Activated CD8-positive, alpha-beta T cell treated with anti-CD3 and anti-CD28 coated beads for 36 hours (primary cell): ENCODE measurements at regions of chr17 and their contacts with region 1.

Region 1: GRCh38 chr17:81917565-81918332 is at the start of gene SIRT7:
- DNase-seq: peak; percentile 78
- ATAC-seq: peak; percentile 92
- H3K4me3 Mint-ChIP-seq: peak within 1 kb of the TSS; percentile 83
- H3K27ac Mint-ChIP-seq: peak within 1 kb of the TSS; percentile 78
- H3K4me1 Mint-ChIP-seq: peaks cover 20% of the 10 kb centered on the region
- H3K27me3 Mint-ChIP-seq: no peaks in the 10 kb centered on the region
- CTCF ChIP-seq: no peak
- total RNA-seq, gene SIRT7: 28.1 to 32.0 TPM

Region 2: GRCh38 chr17:81840826-81841778 is 76.6 kb before region 1 on chr17:
- CTCF ChIA-PET with region 1: no interaction called
- POLR2A ChIA-PET with region 1: no interaction called
- intact Hi-C with region 1: no loop called
- DNase-seq: no peak
- ATAC-seq: no peak
- H3K4me3 Mint-ChIP-seq: no peak overlapping the region
- H3K27ac Mint-ChIP-seq: no peak overlapping the region
- H3K4me1 Mint-ChIP-seq: no peaks in the 10 kb centered on the region
- H3K27me3 Mint-ChIP-seq: no peaks in the 10 kb centered on the region
- CTCF ChIP-seq: no peak

Region 3: DNA sequence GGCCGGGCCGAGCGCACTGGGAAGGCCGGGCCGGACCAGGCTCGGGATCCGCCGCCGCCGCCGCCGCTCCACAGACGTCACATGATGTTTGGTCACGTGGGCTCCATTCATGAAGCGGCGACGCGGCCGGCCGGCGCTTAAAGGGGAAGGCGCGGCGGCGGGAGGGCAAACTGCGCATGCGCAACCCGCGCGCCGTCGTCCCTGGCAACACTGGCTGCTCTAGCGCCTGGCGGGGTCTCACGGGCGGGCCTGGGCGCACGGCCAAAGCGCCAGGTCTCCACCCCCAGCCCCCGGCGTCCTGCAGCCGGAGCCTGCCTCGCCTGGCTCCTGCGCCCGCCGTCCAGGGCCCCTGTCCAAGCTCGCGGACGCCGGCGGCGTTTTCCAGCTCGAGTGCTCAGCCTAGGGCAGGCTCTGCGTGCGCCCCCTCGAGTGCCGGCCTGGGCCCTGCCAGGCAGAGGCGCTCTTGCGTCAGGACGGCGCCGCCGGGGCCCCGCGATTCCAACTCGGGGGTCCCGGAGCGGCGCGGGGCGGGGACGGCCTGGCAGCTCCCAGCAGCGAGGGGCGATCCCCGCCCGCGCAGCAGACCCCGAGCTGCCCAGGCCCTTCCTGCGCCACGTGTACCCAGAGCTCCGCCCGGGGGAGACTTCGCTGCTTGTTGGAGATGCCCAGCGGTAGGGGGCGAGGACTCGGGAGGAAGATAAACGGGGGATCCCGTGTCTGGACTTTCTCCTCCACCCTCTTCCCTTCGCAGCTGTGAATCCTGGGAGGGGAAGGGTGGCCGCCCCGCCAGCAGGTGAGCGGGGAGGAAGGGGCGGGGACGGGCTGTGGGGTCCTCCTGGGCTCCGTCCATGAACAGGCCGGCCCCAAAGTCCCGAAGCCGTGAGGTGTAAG is 10.1 kb after region 1 on chr17 and contains the start of gene MAFG:
- CTCF ChIA-PET with region 1: interaction called, 5 read pairs
- POLR2A ChIA-PET with region 1: interaction called, 16 read pairs
- intact Hi-C with region 1: no loop called
- DNase-seq: peak; percentile 93
- ATAC-seq: peak; percentile 74
- H3K4me3 Mint-ChIP-seq: peak within 1 kb of the TSS; percentile 80
- H3K27ac Mint-ChIP-seq: peak within 1 kb of the TSS; percentile 79
- H3K4me1 Mint-ChIP-seq: peaks cover 34% of the 10 kb centered on the region
- H3K27me3 Mint-ChIP-seq: peaks cover 5% of the 10 kb centered on the region
- CTCF ChIP-seq: peak; percentile 65
- total RNA-seq, gene MAFG: 12.4 to 14.1 TPM

Region 4: GRCh38 chr17:81934850-81935708 is 17.3 kb after region 1 on chr17:
- CTCF ChIA-PET with region 1: no interaction called
- POLR2A ChIA-PET with region 1: interaction called, 12 read pairs
- intact Hi-C with region 1: no loop called
- DNase-seq: no peak
- ATAC-seq: no peak
- H3K4me3 Mint-ChIP-seq: peak overlapping the region; percentile 88
- H3K27ac Mint-ChIP-seq: no peak overlapping the region
- H3K4me1 Mint-ChIP-seq: peaks cover 41% of the 10 kb centered on the region
- H3K27me3 Mint-ChIP-seq: no peaks in the 10 kb centered on the region
- CTCF ChIP-seq: no peak

Region 5: GRCh38 chr17:81980707-81981343 is 63.1 kb after region 1 on chr17:
- CTCF ChIA-PET with region 1: no interaction called
- POLR2A ChIA-PET with region 1: no interaction called
- intact Hi-C with region 1: no loop called
- DNase-seq: no peak
- ATAC-seq: no peak
- H3K4me3 Mint-ChIP-seq: no peak overlapping the region
- H3K27ac Mint-ChIP-seq: no peak overlapping the region
- H3K4me1 Mint-ChIP-seq: peaks cover 22% of the 10 kb centered on the region
- H3K27me3 Mint-ChIP-seq: no peaks in the 10 kb centered on the region
- CTCF ChIP-seq: no peak